Endothelial cell of umbilical vein (primary cell): ENCODE measurements at regions of chr3 and their contacts with region 1.

Region 1: GRCh38 chr3:127800508-127800907 is 21.8 kb downstream of the MGLL start:
- DNase-seq: peak; percentile 89
- H3K4me3 ChIP-seq: no peak overlapping the region
- H3K27ac ChIP-seq: peak overlapping the region; percentile 100
- H3K4me1 ChIP-seq: peaks cover 62% of the 10 kb centered on the region
- H3K27me3 ChIP-seq: no peaks in the 10 kb centered on the region
- CTCF ChIP-seq: no peak
- POLR2A ChIP-seq: peak; percentile 36

Region 2: GRCh38 chr3:127735767-127736704 is 64.5 kb before region 1 on chr3:
- CTCF ChIA-PET with region 1: no interaction called
- POLR2A ChIA-PET with region 1: no interaction called
- dilution Hi-C with region 1: no loop called
- intact Hi-C with region 1: loop called (anchors 1 kb)
- DNase-seq: peak; percentile 59
- H3K4me3 ChIP-seq: no peak overlapping the region
- H3K27ac ChIP-seq: peak overlapping the region; percentile 91
- H3K4me1 ChIP-seq: peaks cover 43% of the 10 kb centered on the region
- H3K27me3 ChIP-seq: no peaks in the 10 kb centered on the region
- CTCF ChIP-seq: no peak
- POLR2A ChIP-seq: no peak

Region 3: DNA sequence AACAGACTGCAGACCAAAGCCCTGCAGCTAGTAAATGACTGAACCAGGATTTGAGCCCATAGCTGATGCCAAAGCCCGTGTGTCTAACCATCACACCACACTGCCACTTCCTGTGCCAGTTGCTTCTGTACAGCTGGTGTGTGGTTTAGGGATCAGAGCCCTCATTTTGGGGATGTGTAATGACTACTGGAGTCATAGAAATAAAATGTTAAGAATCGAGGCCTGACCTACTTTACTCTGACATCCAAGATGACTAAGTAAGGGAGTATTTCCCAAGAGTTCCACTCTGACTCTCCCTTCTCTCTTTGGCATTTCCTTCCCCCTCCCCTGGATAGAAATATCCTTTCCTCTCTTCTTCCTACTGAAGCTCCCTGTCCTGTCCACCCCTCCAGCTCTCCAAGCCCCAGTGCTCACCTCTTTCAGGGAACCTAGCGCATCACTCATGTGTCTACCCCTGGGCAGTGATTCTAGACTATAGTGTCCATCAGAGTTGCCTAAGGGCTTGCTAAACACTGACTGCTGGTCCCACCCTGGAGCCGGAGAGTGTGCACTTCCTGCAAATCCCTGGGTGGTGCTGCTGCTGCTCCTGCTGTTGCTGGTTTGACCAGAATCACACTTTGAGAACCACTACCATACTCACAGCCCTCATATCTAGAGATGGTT is 32.0 kb before region 1 on chr3:
- CTCF ChIA-PET with region 1: interaction called, 5 read pairs
- POLR2A ChIA-PET with region 1: no interaction called
- dilution Hi-C with region 1: no loop called
- intact Hi-C with region 1: loop called (anchors 1 kb)
- DNase-seq: peak; percentile 70
- H3K4me3 ChIP-seq: no peak overlapping the region
- H3K27ac ChIP-seq: peak overlapping the region; percentile 81
- H3K4me1 ChIP-seq: peaks cover 25% of the 10 kb centered on the region
- H3K27me3 ChIP-seq: no peaks in the 10 kb centered on the region
- CTCF ChIP-seq: no peak
- POLR2A ChIP-seq: no peak

Region 4: DNA sequence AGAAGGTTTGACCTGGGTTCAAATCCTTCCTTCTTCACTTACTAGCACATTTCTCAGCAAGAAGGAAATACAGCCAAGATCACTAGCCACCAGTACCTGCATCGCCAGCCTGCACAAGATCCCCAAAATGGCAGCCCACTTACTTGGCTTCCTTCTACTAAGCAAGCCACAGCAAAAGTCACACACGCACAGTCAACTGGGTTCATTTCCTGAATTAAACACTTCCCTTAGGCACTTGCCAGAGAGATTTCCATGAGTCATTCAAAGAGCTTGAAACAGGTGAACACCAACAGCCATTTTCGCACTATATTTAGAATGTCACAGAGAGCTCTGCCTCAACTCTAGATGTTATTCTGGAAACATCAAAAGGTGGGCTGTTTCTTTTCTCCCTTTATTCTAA is 20.8 kb before region 1 on chr3:
- CTCF ChIA-PET with region 1: no interaction called
- POLR2A ChIA-PET with region 1: no interaction called
- dilution Hi-C with region 1: no loop called
- intact Hi-C with region 1: loop called (anchors 1 kb)
- DNase-seq: peak; percentile 84
- H3K4me3 ChIP-seq: no peak overlapping the region
- H3K27ac ChIP-seq: peak overlapping the region; percentile 41
- H3K4me1 ChIP-seq: peaks cover 26% of the 10 kb centered on the region
- H3K27me3 ChIP-seq: no peaks in the 10 kb centered on the region
- CTCF ChIP-seq: no peak
- POLR2A ChIP-seq: no peak